Activated T-helper 2 cell treated with anti-CD3 and anti-CD28 coated beads, Interferon-gamma antibody, Interleukin-2, Interleukin-4, amounts not matched to agents 10 μg/mL and 5 μg/mL and 100 μg/mL, durations not matched to agents 14 hours and 24 hours and 36 hours (primary cell): ENCODE measurements at regions of chrX and their contacts with region 1.

Region 1: DNA sequence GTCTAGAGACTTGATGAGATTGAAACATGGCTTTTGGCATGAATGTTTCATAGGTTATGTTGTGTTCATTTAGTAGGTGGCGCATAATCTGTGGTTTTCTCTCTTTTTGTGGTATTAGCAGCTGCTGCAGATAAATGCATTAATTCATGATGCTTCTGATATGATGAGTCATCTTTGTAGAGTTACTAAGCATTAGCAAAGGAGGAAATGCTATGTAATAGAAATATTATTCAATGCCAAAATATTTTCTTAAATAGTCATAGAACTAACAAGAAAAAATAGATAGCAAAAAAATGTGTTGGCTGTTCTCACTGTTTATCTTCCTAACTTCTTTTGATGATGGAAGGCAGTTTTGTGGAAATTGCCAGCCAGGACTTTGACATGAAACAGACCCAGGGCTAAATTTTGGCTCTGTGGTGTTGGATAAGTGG is 3.6 kb downstream of the ZXDB start:
- DNase-seq: no peak
- H3K4me3 Mint-ChIP-seq: peak overlapping the region; percentile 74
- H3K27ac Mint-ChIP-seq: peak overlapping the region; percentile 63
- H3K4me1 Mint-ChIP-seq: peaks cover 24% of the 10 kb centered on the region
- H3K27me3 Mint-ChIP-seq: no peaks in the 10 kb centered on the region

Region 2: DNA sequence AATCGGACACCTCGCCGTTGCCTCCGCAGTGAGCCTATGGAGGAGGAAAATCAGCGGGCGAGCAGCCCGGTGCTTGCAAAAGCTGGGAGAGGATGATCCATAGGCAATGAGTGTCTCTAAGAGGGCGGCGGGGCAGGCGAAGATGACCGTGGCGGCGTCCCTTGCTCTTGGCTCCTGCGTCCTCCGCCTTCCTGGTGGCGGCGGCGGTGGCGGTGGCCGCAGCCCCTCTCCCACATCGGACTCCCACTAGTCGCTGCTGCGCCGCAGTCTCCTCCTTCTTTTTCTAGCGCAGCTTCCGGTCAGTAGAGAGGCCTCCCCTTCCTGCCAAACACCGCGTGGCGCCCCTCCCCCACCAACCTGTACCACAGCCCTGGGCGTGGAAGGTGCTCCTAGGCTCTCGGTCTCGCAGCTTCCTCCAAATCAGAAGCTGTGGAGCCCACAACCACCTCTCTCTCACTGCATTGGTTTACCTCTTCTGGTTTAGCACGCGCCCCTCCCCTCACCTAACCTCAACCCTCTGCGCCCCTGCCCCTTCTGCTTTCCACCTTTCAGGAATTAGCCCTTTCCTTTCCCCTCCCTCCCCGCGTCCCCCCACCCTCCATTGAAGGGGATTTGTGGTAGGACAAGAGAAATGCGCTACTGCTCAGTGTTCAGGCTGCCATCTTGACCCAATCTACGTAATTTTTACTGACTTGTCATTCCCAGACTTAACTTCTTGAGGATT is 600.0 kb before region 1 on chrX and contains the start of gene SPIN3:
- intact Hi-C with region 1: loop called (anchors 10 kb)
- DNase-seq: peak; percentile 40
- H3K4me3 Mint-ChIP-seq: peak within 1 kb of the TSS; percentile 88
- H3K27ac Mint-ChIP-seq: peak within 1 kb of the TSS; percentile 84
- H3K4me1 Mint-ChIP-seq: peaks cover 30% of the 10 kb centered on the region
- H3K27me3 Mint-ChIP-seq: no peaks in the 10 kb centered on the region
- total RNA-seq, gene SPIN3: 10.0 and 11.5 TPM in 2 replicates

Region 3: GRCh38 chrX:57380026-57380796 is 215.2 kb before region 1 on chrX:
- intact Hi-C with region 1: loop called (anchors 10 kb)
- DNase-seq: no peak
- H3K4me3 Mint-ChIP-seq: no peak overlapping the region
- H3K27ac Mint-ChIP-seq: peak overlapping the region; percentile 81
- H3K4me1 Mint-ChIP-seq: peaks cover 15% of the 10 kb centered on the region
- H3K27me3 Mint-ChIP-seq: no peaks in the 10 kb centered on the region

Region 4: GRCh38 chrX:57906790-57907189 is 311.4 kb after region 1 on chrX:
- intact Hi-C with region 1: loop called (anchors 5 kb)
- DNase-seq: no peak
- H3K4me3 Mint-ChIP-seq: peak overlapping the region; percentile 49
- H3K27ac Mint-ChIP-seq: no peak overlapping the region
- H3K4me1 Mint-ChIP-seq: peaks cover 27% of the 10 kb centered on the region
- H3K27me3 Mint-ChIP-seq: no peaks in the 10 kb centered on the region